ENCODE measurements at regions of chr7 and their contacts with region 1.

Region 1: DNA sequence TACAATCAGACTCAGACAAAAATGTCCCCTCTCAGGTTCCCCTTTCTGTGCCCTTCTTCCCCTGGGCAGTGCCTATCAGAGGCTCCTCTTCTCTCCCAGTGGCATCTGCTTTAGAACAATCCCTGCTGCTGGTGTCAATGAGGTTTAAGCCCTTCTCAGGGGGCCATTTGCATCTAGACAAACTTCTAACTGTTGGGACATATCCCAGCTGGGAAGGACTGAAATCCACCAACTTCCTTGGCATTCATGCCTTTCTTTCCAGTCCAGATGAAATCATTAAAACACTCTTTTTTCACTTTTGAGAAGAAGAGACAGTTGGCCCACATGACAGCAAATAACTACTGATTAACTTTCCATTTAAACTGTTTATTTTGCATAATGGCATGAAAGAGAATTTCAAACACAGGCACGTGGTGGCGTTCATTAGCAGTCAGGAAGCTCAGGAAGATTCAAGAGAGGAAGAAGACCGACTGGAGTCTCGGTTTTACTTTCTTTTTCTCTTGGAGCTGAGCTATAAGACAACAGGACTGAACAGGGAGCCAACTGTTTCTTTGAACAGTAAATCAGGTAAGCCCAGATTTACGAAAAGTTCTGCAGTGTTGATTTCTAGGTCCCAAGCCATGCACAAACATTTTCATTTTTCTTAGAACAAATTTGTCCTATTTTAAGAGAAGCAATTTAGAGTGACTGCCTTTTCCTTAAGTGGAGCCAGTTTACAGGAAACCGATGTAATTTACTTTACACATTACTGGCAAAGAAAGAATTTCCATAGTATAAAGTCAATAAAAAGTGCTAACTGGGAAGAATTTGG is at the start of gene GIMAP2:
- DNase-seq: peak; percentile 39
- H3K4me3 Mint-ChIP-seq: peak within 1 kb of the TSS; percentile 93
- H3K27ac Mint-ChIP-seq: peak within 1 kb of the TSS; percentile 98
- H3K4me1 Mint-ChIP-seq: peaks cover 87% of the 10 kb centered on the region
- H3K27me3 Mint-ChIP-seq: no peaks in the 10 kb centered on the region
- total RNA-seq, gene GIMAP2: 24.7 and 29.7 TPM in 2 replicates

Region 2: GRCh38 chr7:150520145-150520544 is 165.3 kb before region 1 on chr7:
- intact Hi-C with region 1: loop called (anchors 1 kb)
- DNase-seq: peak; percentile 43
- H3K4me3 Mint-ChIP-seq: peak overlapping the region; percentile 96
- H3K27ac Mint-ChIP-seq: peak overlapping the region; percentile 93
- H3K4me1 Mint-ChIP-seq: peaks cover 65% of the 10 kb centered on the region
- H3K27me3 Mint-ChIP-seq: no peaks in the 10 kb centered on the region

Region 3: GRCh38 chr7:150631866-150632864 is 53.3 kb before region 1 on chr7 and contains the start of gene GIMAP6:
- intact Hi-C with region 1: loop called (anchors 1 kb)
- DNase-seq: peak; percentile 48
- H3K4me3 Mint-ChIP-seq: peak within 1 kb of the TSS; percentile 94
- H3K27ac Mint-ChIP-seq: peak within 1 kb of the TSS; percentile 94
- H3K4me1 Mint-ChIP-seq: peaks cover 68% of the 10 kb centered on the region
- H3K27me3 Mint-ChIP-seq: no peaks in the 10 kb centered on the region
- total RNA-seq, gene GIMAP6: 38.7 and 41.3 TPM in 2 replicates

Region 4: GRCh38 chr7:150703209-150703608 is 17.8 kb after region 1 on chr7:
- intact Hi-C with region 1: loop called (anchors 2 kb)
- DNase-seq: no peak
- H3K4me3 Mint-ChIP-seq: no peak overlapping the region
- H3K27ac Mint-ChIP-seq: no peak overlapping the region
- H3K4me1 Mint-ChIP-seq: peaks cover 3% of the 10 kb centered on the region
- H3K27me3 Mint-ChIP-seq: no peaks in the 10 kb centered on the region

Region 5: GRCh38 chr7:150716368-150716767 is 30.9 kb after region 1 on chr7 and contains the start of gene GIMAP1:
- intact Hi-C with region 1: loop called (anchors 1 kb)
- DNase-seq: peak; percentile 58
- H3K4me3 Mint-ChIP-seq: peak within 1 kb of the TSS; percentile 97
- H3K27ac Mint-ChIP-seq: peak within 1 kb of the TSS; percentile 75
- H3K4me1 Mint-ChIP-seq: peaks cover 64% of the 10 kb centered on the region
- H3K27me3 Mint-ChIP-seq: no peaks in the 10 kb centered on the region
- total RNA-seq, gene GIMAP1: 4.6 and 4.9 TPM in 2 replicates

Region 6: GRCh38 chr7:150737265-150738055 is 52.0 kb after region 1 on chr7 and contains the start of gene GIMAP5:
- intact Hi-C with region 1: loop called (anchors 1 kb)
- DNase-seq: peak; percentile 51
- H3K4me3 Mint-ChIP-seq: peak within 1 kb of the TSS; percentile 97
- H3K27ac Mint-ChIP-seq: peak within 1 kb of the TSS; percentile 99
- H3K4me1 Mint-ChIP-seq: peaks cover 88% of the 10 kb centered on the region
- H3K27me3 Mint-ChIP-seq: no peaks in the 10 kb centered on the region
- total RNA-seq, gene GIMAP5: 53.8 and 59.7 TPM in 2 replicates

Region 7: DNA sequence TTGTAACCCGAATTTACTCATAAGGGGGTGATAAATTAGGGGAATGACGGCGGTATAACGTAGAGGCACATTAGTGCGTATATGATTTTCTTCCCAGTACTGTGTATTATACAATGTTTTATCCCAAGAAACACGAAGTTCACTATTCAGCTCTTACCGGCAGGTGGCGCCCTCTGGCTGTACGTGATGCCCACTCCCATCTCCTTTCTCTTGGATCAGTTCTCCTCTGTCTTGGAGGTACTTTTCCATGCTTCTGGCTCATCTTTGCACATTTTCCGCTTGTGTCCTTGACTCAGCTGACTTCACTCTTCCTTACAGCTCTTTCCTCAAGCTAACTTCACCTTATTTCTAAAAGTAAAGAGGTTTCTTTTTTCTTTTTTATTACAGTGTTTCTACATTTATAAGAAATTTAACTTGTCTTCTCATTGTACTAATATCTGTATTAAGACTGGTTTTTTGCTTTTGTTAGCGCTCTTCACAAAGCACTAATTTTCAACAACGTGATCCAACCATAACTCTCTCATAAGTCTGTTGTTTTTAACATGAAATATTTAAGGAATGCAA is 93.4 kb after region 1 on chr7:
- intact Hi-C with region 1: no loop called
- DNase-seq: peak; percentile 54
- H3K4me3 Mint-ChIP-seq: no peak overlapping the region
- H3K27ac Mint-ChIP-seq: no peak overlapping the region
- H3K4me1 Mint-ChIP-seq: peaks cover 9% of the 10 kb centered on the region
- H3K27me3 Mint-ChIP-seq: peaks cover 29% of the 10 kb centered on the region

Measured in activated T-helper 1 cell treated with anti-CD3 and anti-CD28 coated beads, Interleukin-12 subunit alpha, Interleukin-12 subunit beta, Interleukin-2, Interleukin-4 antibody, amounts not matched to agents 30 ng/mL and 10 ng/mL and 1 ng/mL, durations not matched to agents 14 hours and 24 hours and 36 hours (primary cell).